ENCODE measurements at regions of chr5 and their contacts with region 1.

Region 1: DNA sequence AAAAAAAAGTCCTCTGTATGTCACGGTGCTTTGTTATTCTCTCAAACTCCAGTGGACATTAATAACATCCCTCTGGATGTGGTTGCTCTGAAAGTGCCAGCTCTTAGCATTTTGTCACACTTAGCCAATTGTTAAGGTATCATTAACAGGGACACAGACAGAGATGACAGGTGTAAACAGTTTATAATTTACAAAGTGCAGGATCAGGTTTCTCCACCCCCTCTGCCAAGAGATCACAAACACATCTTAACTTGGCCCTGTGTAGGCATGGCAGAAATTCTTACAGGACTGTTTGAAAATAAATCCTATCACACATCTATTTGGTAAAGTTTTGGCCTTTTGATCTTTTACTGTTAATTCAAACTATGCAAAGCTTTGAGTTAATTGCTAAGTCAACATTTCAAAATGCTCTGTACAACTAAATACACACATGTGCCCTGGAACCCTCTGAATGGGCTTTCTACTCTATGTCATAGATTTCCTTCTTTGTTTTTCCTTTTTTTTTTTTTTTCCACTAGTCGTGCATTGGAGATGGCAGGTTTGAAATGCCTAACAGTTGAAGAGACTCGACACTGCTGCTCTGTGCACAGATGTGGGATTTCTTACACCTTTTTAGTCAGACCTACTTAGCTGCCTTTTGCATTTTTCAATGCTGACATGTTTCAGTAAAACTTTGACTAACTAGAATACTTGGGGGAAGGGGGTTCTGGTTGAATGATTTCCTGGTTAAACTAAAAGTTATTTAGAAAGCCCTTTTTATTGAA is 41.7 kb downstream of the SEMA6A start:
- DNase-seq: no peak
- H3K4me3 Mint-ChIP-seq: peak overlapping the region; percentile 27
- H3K27ac Mint-ChIP-seq: no peak overlapping the region
- H3K4me1 Mint-ChIP-seq: peaks cover 31% of the 10 kb centered on the region
- H3K27me3 Mint-ChIP-seq: no peaks in the 10 kb centered on the region
- CTCF ChIP-seq: no peak

Region 2: GRCh38 chr5:116273448-116274207 is 259.3 kb before region 1 on chr5:
- CTCF ChIA-PET with region 1: no interaction called
- intact Hi-C with region 1: loop called (anchors 10 kb)
- DNase-seq: no peak
- H3K4me3 Mint-ChIP-seq: no peak overlapping the region
- H3K27ac Mint-ChIP-seq: no peak overlapping the region
- H3K4me1 Mint-ChIP-seq: peaks cover 12% of the 10 kb centered on the region
- H3K27me3 Mint-ChIP-seq: no peaks in the 10 kb centered on the region
- CTCF ChIP-seq: no peak

Region 3: DNA sequence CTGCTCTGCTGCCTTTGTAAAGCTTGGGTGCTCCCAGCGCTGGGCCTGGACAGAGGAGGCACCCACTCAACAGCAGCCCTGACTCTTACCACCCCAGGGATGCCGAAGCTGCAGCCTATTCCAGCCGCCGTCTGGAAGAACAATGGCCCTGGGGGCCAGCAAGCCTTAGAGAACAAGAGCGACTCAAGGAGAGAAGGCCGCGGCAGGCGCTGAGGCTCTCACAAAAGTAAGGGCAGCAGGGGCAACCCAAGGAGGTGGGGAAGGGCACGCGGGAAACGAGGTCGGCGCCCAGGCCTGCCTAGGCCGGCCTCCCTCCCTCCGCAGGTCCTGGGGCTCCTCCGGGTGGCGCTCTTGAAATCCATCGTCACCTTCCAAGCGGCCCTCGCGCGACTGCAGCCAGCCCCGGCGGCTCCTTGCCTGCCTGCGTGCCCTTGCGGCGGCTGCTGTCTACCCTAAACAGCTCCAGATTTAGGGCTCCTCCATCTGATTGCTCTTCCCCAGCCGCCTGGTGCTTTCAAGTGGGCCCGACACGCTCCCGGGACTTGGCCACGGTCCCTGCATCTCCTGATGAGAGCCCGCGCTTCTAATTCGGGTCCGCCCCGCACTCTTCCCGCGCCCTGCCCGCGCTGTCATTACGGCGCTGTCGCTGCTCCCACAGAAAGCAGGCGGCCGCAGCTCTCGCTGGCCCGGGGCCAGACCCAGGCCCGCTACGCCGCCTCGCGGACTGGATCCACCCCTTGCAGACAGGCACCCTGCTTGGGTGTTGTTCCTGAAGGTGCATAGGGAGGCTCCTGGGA is 171.6 kb before region 1 on chr5:
- CTCF ChIA-PET with region 1: no interaction called
- intact Hi-C with region 1: no loop called
- DNase-seq: peak; percentile 78
- H3K4me3 Mint-ChIP-seq: peak overlapping the region; percentile 94
- H3K27ac Mint-ChIP-seq: peak overlapping the region; percentile 30
- H3K4me1 Mint-ChIP-seq: peaks cover 10% of the 10 kb centered on the region
- H3K27me3 Mint-ChIP-seq: no peaks in the 10 kb centered on the region
- CTCF ChIP-seq: no peak

Region 4: DNA sequence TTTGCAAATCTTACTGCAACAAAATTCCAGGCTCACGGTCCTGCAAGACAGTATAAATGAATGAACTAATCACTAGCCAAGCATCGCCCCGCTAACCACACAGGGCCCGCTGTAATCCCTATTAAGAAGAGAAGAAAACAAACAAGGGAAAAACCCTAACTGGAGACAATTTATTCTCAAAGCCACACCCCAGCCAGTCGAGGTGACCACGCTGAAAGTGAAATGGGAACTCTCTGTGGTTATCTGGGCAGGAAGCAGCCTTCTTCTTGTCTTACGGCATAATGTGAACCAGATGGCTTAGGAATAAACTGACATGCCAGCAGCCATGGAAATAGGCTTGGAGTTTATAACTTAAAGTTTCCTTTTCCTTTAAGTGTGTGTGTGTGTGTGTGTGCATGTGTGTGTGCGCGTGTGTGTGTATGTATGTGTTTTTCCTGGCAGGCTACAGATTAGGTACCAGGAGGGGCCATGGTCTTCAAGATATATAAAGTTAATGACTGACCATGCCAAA is 78.5 kb before region 1 on chr5:
- CTCF ChIA-PET with region 1: interaction called, 4 read pairs
- intact Hi-C with region 1: loop called (anchors 5 kb)
- DNase-seq: no peak
- H3K4me3 Mint-ChIP-seq: no peak overlapping the region
- H3K27ac Mint-ChIP-seq: peak overlapping the region; percentile 21
- H3K4me1 Mint-ChIP-seq: peaks cover 42% of the 10 kb centered on the region
- H3K27me3 Mint-ChIP-seq: no peaks in the 10 kb centered on the region
- CTCF ChIP-seq: no peak

Region 5: DNA sequence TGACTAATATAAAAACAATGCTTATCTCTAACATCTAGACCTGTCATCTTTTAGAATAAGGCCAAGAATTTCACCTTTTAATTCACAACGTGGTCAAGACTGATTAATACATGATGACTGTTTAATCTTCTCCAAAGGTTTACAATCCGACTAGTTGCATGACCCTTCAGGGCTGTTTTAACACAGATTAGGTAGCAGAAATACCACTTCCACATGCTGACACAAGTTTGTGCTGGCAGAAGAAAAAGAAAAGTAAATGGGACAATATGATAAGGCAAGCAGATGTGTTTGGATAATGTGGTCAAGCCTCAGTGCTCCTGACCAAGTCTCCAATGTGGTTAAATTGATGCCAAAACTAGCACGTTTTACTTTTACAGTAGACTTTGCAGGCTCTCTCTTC is 10.6 kb after region 1 on chr5:
- CTCF ChIA-PET with region 1: interaction called, 11 read pairs
- intact Hi-C with region 1: loop called (anchors 2 kb)
- DNase-seq: no peak
- H3K4me3 Mint-ChIP-seq: no peak overlapping the region
- H3K27ac Mint-ChIP-seq: peak overlapping the region; percentile 2
- H3K4me1 Mint-ChIP-seq: peaks cover 47% of the 10 kb centered on the region
- H3K27me3 Mint-ChIP-seq: no peaks in the 10 kb centered on the region
- CTCF ChIP-seq: no peak